Kidney (tissue), 22 donors: ENCODE measurements at regions of chr17 and their contacts with region 1.

Region 1: GRCh38 chr17:48344246-48344645 is 85.8 kb downstream of the SKAP1 start:
- DNase-seq: peak in 2 of 5 donors; percentile 67 to 72
- H3K4me3 ChIP-seq: no peak overlapping the region
- H3K27ac ChIP-seq: no peak overlapping the region
- H3K4me1 ChIP-seq: peaks cover 0 to 9% (median 0%) of the 10 kb centered on the region in 3 donors
- H3K27me3 ChIP-seq: peaks cover 2% of the 10 kb centered on the region
- CTCF ChIP-seq: no peak

Region 2: DNA sequence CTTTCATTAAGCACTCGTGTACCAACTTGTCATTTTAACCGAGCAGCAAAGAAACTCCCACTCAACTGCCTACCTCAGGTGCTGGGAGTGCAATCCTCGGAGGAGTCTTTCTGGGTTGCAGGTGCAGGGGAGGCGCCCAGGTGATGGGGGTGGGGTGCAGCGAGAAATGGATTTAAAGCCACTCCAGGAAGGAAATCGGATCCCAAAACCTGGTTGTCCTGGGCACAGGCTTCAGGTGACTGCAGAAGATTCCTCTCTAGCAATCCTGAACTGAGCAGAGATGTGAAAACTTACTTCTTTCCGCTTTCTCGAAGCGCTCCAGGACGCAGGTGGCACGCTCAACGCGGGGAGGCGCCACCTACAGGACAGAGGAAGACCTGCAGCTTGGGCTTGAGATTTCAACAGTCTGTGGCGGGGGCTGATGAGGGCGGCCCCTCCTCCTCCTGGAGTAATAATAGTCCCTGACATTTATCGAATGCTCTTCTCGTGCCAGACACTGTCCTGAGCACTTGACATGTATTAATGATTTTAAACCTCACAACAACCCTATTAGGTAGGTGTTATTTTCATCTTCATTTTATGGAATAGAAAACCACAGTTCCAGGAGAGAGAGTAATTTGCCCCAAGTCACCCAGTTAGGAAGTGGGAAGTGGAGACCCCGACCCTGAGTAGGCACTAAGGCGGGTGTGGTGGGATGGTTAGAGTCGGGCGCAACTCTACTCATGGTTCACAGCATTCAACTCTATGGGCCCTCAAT is 113.0 kb after region 1 on chr17:
- intact Hi-C with region 1: loop called (anchors 10 kb)
- DNase-seq: peak; percentile 76 to 86 (median 79)
- H3K4me3 ChIP-seq: peak overlapping the region; percentile 26 to 49 (median 46)
- H3K27ac ChIP-seq: no peak overlapping the region
- H3K4me1 ChIP-seq: peaks cover 0 to 2% (median 0%) of the 10 kb centered on the region in 3 donors
- H3K27me3 ChIP-seq: no peaks in the 10 kb centered on the region
- CTCF ChIP-seq: peak; percentile 93